Mammary epithelial cell (primary cell): ENCODE measurements at regions of chr2 and their contacts with region 1.

Region 1: DNA sequence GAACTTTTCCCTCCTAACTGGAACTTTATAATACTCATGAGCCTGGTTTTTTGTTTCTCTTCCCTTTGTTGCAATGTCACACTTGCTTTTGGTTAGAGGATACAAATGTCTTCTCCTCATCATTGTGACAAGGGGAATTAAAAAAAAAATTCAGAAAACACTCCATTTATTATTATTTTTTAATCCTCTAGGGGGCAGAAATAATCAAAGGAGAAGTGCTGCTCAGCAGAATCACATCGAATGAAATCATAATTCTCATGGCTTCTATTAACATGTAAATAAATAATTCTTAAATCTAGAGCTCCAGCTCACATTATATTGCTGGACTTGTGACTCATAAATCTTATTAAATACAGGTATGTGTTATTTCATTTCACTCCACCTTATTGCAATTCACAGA is 273.8 kb downstream of the TRIB2 start:
- DNase-seq: no peak
- H3K4me3 ChIP-seq: no peak overlapping the region
- H3K27ac ChIP-seq: no peak overlapping the region
- H3K4me1 ChIP-seq: no peaks in the 10 kb centered on the region
- H3K27me3 ChIP-seq: no peaks in the 10 kb centered on the region
- CTCF ChIP-seq: peak; percentile 34 to 36

Region 2: DNA sequence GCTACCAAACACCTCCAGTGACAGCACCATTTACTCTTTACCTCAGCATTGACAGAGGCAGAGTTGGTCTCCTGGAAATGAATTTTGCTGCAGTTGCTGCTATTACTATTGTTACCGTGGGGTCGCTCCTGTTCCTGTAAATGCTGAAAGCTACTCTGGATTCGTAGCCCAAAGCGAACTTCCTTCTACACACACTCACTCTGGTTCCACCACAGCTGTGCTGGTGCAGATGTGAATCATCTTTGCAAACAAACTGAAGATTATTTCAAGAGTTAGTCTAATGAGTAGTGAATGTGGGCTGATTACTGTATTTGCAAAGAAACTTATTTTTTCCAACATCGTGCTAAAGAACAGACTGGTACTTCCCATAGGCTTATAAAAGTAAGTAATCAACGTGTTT is 940.1 kb before region 1 on chr2:
- CTCF ChIA-PET with region 1: interaction called, 14 read pairs
- dilution Hi-C with region 1: no loop called
- in situ Hi-C with region 1: no loop called
- intact Hi-C with region 1: no loop called
- DNase-seq: peak; percentile 6
- H3K4me3 ChIP-seq: no peak overlapping the region
- H3K27ac ChIP-seq: no peak overlapping the region
- H3K4me1 ChIP-seq: peaks cover 10% of the 10 kb centered on the region
- H3K27me3 ChIP-seq: no peaks in the 10 kb centered on the region
- CTCF ChIP-seq: no peak

Region 3: DNA sequence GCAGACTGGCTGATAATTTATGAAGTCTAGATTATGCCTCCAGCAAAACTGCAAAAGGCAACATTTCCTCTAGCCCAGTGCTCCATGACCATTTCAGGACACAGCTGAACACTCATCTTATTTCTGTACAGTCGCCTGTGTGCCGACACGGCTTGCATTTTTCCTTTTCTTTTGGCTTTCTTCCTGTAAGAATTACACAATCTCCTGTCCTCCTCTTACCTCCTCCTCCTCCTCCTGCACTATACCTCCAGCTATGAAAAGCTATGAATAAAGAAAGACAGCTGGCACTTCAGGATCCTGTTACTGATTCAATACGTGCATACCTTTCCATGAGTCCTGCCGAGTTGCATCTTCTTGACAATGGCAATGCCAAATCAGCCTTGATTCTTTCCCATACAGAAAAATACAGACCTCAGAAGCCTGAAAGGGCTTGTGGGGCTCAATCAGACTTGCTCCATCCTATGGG is 306.0 kb before region 1 on chr2:
- CTCF ChIA-PET with region 1: interaction called, 12 read pairs
- dilution Hi-C with region 1: no loop called
- in situ Hi-C with region 1: no loop called
- intact Hi-C with region 1: no loop called
- DNase-seq: peak; percentile 64
- H3K4me3 ChIP-seq: peak overlapping the region in 1 of 3 experiments; percentile 9
- H3K27ac ChIP-seq: no peak overlapping the region
- H3K4me1 ChIP-seq: peaks cover 9% of the 10 kb centered on the region
- H3K27me3 ChIP-seq: no peaks in the 10 kb centered on the region
- CTCF ChIP-seq: no peak